Common myeloid progenitor, CD34-positive (primary cell): ENCODE measurements at regions of chr17 and their contacts with region 1.

Region 1: GRCh38 chr17:28547623-28548416 is 4.6 kb downstream of the UNC119 start:
- DNase-seq: peak; percentile 63 to 89 (median 82)
- H3K4me3 ChIP-seq: peak overlapping the region in 1 of 7 experiments; percentile 1
- H3K27ac ChIP-seq: peak overlapping the region in 1 of 2 experiments; percentile 45
- H3K4me1 ChIP-seq: peaks cover 2 to 34% (median 25%) of the 10 kb centered on the region in 4 experiments
- H3K27me3 ChIP-seq: no peaks in the 10 kb centered on the region

Region 2: DNA sequence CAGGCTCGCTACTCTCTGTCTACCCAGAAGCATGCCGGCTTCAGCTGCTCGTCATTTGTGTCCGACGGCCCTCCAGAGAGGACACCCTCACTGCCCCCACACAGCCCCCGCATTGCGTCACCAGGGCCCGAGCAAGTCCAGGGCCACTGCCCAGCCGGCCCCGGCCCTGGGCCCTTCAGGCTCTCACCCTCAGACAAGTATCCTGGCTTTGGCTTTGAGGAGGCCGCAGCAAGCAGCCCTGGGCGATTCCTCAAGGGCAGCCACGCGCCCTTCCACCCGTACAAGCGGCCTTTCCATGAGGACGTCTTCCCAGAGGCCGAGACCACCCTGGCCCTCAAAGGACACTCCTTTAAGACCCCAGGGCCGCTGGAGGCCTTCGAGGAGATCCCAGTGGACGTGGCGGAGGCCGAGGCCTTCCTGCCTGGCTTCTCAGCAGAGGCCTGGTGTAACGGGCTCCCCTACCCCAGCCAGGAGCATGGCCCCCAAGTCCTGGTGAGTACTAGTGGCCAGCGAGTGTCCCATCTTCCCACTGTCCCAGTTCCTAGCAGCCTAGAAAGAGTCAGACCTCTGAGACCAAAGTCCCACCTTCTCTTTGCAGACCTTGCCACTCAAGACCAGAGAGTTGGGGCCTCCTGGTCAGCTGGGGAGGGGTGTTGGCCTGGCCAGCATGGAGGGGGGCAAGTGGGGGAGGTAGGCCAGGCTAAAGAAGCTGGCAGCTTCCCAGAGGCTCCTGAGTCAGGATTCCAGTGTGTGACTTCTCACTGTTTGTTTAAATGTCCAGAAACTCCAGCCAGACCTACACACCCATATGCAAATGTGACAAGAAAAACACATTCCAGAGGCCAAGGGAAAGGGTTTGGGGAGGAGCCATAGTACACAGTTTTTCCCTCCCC is 23.1 kb before region 1 on chr17:
- CTCF ChIA-PET with region 1: interaction called, 11 read pairs
- POLR2A ChIA-PET with region 1: no interaction called
- DNase-seq: no peak
- H3K4me3 ChIP-seq: no peak overlapping the region
- H3K27ac ChIP-seq: no peak overlapping the region
- H3K4me1 ChIP-seq: peaks cover 0 to 10% (median 6%) of the 10 kb centered on the region in 4 experiments
- H3K27me3 ChIP-seq: no peaks in the 10 kb centered on the region

Region 3: GRCh38 chr17:28571255-28572122 is 23.7 kb after region 1 on chr17 and contains the start of gene PIGS:
- CTCF ChIA-PET with region 1: interaction called, 12 read pairs
- POLR2A ChIA-PET with region 1: no interaction called
- DNase-seq: peak; percentile 90 to 92 (median 91)
- H3K4me3 ChIP-seq: peak within 1 kb of the TSS; percentile 78 to 97 (median 89)
- H3K27ac ChIP-seq: peak within 1 kb of the TSS; percentile 27 to 79
- H3K4me1 ChIP-seq: peaks cover 8 to 37% (median 27%) of the 10 kb centered on the region in 4 experiments
- H3K27me3 ChIP-seq: no peaks in the 10 kb centered on the region